Naive thymus-derived CD4-positive, alpha-beta T cell (primary cell): ENCODE measurements at regions of chr3 and their contacts with region 1.

Region 1: DNA sequence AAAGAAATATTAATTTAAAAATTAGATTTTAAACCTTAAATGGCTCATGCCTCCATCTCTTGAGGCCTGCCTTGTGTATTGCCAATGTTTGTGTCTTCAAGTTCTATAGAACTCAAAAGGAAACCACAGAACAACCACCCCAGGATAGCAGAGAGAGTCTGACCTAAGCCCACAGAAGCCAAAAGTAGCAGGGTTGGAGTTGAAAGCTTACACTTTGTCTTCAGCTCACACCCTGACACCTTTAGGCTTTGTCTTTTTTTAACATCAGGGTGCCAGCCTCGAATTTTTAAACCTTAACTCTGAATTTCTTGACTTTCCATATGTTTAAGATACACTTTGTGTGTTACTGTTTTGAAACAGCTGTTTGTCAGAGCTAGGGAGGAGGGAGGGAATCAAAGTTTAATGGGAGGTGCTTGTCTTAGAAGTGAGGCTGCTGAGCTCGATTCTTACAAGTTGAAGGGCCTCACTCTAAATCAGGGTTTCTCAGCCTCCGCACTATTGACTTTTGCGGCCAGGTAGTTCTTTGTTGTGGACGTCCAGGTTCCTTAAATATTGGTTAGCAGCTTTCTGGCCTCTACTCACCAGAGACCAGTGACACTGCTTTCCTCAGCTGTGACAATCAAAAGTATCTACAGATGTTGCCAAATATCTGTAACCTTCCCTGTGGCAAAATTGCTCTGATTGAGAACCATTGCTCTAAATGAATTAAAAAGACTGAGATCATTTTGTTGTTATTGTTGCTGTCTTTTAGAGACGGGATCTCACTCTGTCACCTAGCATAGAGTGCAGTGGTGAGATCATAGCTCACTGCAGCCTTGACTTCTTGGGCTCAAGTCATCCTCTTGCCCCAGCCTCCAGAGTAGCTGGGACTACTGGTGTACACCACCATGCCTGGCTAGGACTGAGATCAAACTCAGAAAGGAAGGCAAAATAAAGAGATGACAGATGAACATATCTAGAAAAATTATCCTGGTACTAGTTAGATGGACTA is 139.2 kb upstream of the EOMES start:
- DNase-seq: peak in 6 of 9 donors; percentile 25 to 56 (median 45)
- ATAC-seq: peak; percentile 86
- H3K4me3 ChIP-seq: no peak overlapping the region
- H3K4me3 Mint-ChIP-seq: peak overlapping the region; percentile 4 to 64 (median 55)
- H3K27ac ChIP-seq: peak overlapping the region; percentile 47
- H3K27ac Mint-ChIP-seq: peak overlapping the region; percentile 83 to 95 (median 92)
- H3K4me1 ChIP-seq: peaks cover 23 to 26% of the 10 kb centered on the region in 2 donors
- H3K4me1 Mint-ChIP-seq: peaks cover 23 to 56% (median 52%) of the 10 kb centered on the region in 7 donors
- H3K27me3 ChIP-seq: no peaks in the 10 kb centered on the region
- H3K27me3 Mint-ChIP-seq: no peaks in the 10 kb centered on the region

Region 2: DNA sequence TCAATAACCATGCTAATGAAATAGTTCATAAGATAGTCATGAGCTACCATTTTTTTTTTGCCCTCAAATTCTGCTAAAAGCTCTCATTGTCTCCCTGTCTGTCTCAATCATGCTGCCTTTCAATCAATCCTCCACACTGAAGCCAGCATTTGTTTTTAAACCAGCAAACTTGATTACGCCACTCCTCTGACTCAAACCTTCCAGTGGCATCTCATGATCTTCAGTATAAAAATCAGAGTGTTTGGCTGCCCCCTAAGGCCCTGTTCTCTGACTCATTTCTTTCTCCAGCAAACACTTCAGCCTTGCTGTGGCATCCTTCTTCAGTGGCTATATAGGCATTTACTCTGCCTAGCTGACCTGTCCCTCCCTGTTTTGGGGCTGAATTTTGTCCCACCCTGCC is 103.3 kb before region 1 on chr3:
- CTCF ChIA-PET with region 1: no interaction called
- POLR2A ChIA-PET with region 1: no interaction called
- intact Hi-C with region 1: loop called in 1 of 2 experiments (anchors 10 kb)
- DNase-seq: peak in 1 of 9 donors; percentile 28
- ATAC-seq: no peak
- H3K4me3 ChIP-seq: no peak overlapping the region
- H3K4me3 Mint-ChIP-seq: no peak overlapping the region
- H3K27ac ChIP-seq: no peak overlapping the region
- H3K27ac Mint-ChIP-seq: no peak overlapping the region
- H3K4me1 ChIP-seq: no peaks in the 10 kb centered on the region
- H3K4me1 Mint-ChIP-seq: peaks cover 0 to 6% (median 1%) of the 10 kb centered on the region in 7 donors
- H3K27me3 ChIP-seq: no peaks in the 10 kb centered on the region
- H3K27me3 Mint-ChIP-seq: no peaks in the 10 kb centered on the region

Region 3: DNA sequence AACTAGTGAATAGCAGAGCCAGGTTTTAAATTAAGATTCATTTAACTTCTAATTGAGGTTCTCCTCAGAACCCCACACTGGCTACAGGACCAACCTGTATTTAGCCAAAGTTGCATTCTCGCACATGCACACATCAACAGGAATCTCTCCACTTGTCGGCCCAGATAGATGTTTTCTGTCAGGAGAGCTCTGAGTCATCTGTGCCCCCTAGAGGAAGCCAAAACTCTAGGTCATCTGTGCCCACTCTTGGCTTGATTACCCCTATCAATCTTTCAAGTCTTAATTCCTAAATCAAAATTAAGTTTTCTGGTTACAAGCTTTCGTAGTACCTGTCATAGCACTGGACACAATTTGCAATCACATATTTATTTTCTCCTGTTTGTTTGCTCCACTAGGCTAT is 34.3 kb before region 1 on chr3:
- CTCF ChIA-PET with region 1: no interaction called
- POLR2A ChIA-PET with region 1: no interaction called
- intact Hi-C with region 1: loop called in 1 of 2 experiments (anchors 5 kb)
- DNase-seq: no peak
- ATAC-seq: no peak
- H3K4me3 ChIP-seq: no peak overlapping the region
- H3K4me3 Mint-ChIP-seq: no peak overlapping the region
- H3K27ac ChIP-seq: no peak overlapping the region
- H3K27ac Mint-ChIP-seq: peak overlapping the region in 1 of 9 donors; percentile 38
- H3K4me1 ChIP-seq: peaks cover 0 to 5% of the 10 kb centered on the region in 2 donors
- H3K4me1 Mint-ChIP-seq: peaks cover 1 to 16% (median 12%) of the 10 kb centered on the region in 7 donors
- H3K27me3 ChIP-seq: no peaks in the 10 kb centered on the region
- H3K27me3 Mint-ChIP-seq: no peaks in the 10 kb centered on the region

Region 4: DNA sequence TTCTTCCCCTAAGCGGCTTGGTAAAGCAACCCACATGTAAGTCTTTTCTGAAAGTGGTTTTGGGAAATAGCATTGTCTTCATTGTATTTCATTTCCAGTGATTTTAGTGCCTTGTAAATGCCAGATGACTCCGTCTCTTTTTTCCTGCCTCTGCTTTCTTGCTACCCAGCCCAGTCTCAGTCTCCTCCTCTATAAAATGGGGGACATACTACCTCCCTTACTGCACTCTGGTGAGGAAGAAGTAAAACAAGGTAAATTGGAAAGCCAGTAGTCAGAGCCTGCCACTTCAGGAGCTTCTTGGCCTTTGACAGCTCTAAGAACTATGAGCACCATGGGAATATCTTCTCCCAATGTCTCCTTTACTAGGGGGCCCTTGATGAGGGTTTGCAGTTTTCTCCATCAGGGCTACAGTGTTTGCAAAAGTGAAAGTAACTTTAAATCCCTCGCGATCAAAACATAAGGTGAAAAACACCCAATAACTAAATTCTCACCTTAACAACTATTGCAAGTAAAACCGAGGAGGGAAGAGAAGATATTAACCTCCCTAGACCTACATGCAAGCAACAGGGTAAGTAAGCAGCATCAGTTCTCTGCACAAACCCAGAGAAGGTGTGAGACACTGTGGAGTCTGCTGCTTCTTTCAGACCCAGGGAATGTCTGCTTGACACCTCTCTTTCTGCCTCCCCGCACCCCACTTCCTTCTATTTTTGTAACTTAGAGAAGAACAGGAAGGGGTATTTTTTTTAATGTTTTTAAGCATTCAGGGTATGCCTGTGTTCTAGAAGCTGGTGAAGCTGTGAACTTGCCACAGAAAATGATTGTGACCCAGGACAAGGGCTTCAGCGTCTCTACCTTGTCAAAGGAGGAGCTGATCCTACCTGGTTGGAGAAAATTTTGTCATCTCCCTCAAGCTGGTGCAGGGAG is 19.9 kb after region 1 on chr3:
- CTCF ChIA-PET with region 1: interaction called, 5 read pairs
- POLR2A ChIA-PET with region 1: interaction called, 10 read pairs
- intact Hi-C with region 1: loop called (anchors 1 kb)
- DNase-seq: peak in 8 of 9 donors; percentile 24 to 75 (median 62)
- ATAC-seq: peak; percentile 87
- H3K4me3 ChIP-seq: peak overlapping the region; percentile 43
- H3K4me3 Mint-ChIP-seq: peak overlapping the region; percentile 82 to 94 (median 89)
- H3K27ac ChIP-seq: peak overlapping the region; percentile 75
- H3K27ac Mint-ChIP-seq: peak overlapping the region; percentile 91 to 99 (median 97)
- H3K4me1 ChIP-seq: peaks cover 28 to 47% of the 10 kb centered on the region in 2 donors
- H3K4me1 Mint-ChIP-seq: peaks cover 39 to 85% (median 73%) of the 10 kb centered on the region in 7 donors
- H3K27me3 ChIP-seq: no peaks in the 10 kb centered on the region
- H3K27me3 Mint-ChIP-seq: peaks cover 0 to 4% (median 0%) of the 10 kb centered on the region in 5 donors

Region 5: GRCh38 chr3:27900316-27900715 is 39.0 kb after region 1 on chr3:
- CTCF ChIA-PET with region 1: no interaction called
- POLR2A ChIA-PET with region 1: no interaction called
- intact Hi-C with region 1: loop called (anchors 1 kb)
- DNase-seq: peak in 1 of 9 donors; percentile 25
- ATAC-seq: peak; percentile 63
- H3K4me3 ChIP-seq: no peak overlapping the region
- H3K4me3 Mint-ChIP-seq: peak overlapping the region in 2 of 10 donors; percentile 10 to 25
- H3K27ac ChIP-seq: no peak overlapping the region
- H3K27ac Mint-ChIP-seq: peak overlapping the region in 6 of 9 donors; percentile 2 to 76 (median 52)
- H3K4me1 ChIP-seq: peaks cover 24 to 37% of the 10 kb centered on the region in 2 donors
- H3K4me1 Mint-ChIP-seq: peaks cover 19 to 63% (median 49%) of the 10 kb centered on the region in 7 donors
- H3K27me3 ChIP-seq: no peaks in the 10 kb centered on the region
- H3K27me3 Mint-ChIP-seq: no peaks in the 10 kb centered on the region

Region 6: GRCh38 chr3:27905625-27906024 is 44.3 kb after region 1 on chr3:
- CTCF ChIA-PET with region 1: no interaction called
- POLR2A ChIA-PET with region 1: interaction called, 4 read pairs
- intact Hi-C with region 1: loop called in 1 of 2 experiments (anchors 1 kb)
- DNase-seq: no peak
- ATAC-seq: peak; percentile 64
- H3K4me3 ChIP-seq: no peak overlapping the region
- H3K4me3 Mint-ChIP-seq: no peak overlapping the region
- H3K27ac ChIP-seq: no peak overlapping the region
- H3K27ac Mint-ChIP-seq: peak overlapping the region in 1 of 9 donors; percentile 92
- H3K4me1 ChIP-seq: peaks cover 24 to 45% of the 10 kb centered on the region in 2 donors
- H3K4me1 Mint-ChIP-seq: peaks cover 15 to 51% (median 38%) of the 10 kb centered on the region in 7 donors
- H3K27me3 ChIP-seq: no peaks in the 10 kb centered on the region
- H3K27me3 Mint-ChIP-seq: no peaks in the 10 kb centered on the region

Region 7: DNA sequence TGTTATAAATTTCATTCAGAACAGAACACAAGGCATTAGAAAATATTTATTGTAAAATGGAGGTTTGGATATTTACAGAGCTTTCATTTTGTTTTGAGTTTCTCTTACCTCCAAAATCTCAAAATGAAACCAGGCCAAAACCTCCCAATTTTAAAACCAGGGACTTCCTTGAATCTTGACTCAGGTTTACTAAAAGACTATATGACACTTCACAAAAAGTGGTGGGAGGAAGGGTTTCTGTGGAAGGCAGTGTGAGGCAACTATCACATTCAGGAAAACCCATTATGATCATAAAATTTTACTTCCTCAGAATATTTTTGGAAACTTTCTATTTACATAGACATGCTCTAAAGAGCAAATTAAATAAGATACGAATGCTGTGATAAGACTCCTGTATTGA is 66.5 kb after region 1 on chr3:
- CTCF ChIA-PET with region 1: no interaction called
- POLR2A ChIA-PET with region 1: no interaction called
- intact Hi-C with region 1: loop called in 1 of 2 experiments (anchors 10 kb)
- DNase-seq: no peak
- ATAC-seq: no peak
- H3K4me3 ChIP-seq: no peak overlapping the region
- H3K4me3 Mint-ChIP-seq: no peak overlapping the region
- H3K27ac ChIP-seq: no peak overlapping the region
- H3K27ac Mint-ChIP-seq: peak overlapping the region in 1 of 9 donors; percentile 20
- H3K4me1 ChIP-seq: no peaks in the 10 kb centered on the region
- H3K4me1 Mint-ChIP-seq: peaks cover 0 to 22% (median 9%) of the 10 kb centered on the region in 7 donors
- H3K27me3 ChIP-seq: no peaks in the 10 kb centered on the region
- H3K27me3 Mint-ChIP-seq: no peaks in the 10 kb centered on the region

Region 8: DNA sequence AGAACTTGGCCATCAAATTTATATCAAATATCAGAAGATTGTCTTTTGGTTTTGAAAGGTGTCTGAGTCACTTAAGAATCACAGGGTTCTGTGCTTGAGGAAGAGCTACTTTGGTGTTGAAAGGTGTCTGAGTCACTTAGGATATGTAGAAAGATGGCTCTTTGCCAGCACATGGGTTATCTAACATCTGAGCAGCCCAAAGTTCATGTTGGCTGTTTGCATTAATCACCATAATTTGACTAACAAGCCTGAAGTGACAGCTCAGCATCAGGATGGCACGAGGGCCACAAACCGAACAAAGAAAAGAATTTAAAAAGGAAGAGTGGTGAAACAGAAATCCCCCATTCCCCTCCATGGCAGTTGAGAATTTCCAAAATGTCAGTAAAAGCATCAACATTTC is 189.6 kb after region 1 on chr3:
- CTCF ChIA-PET with region 1: no interaction called
- POLR2A ChIA-PET with region 1: no interaction called
- intact Hi-C with region 1: no loop called
- DNase-seq: no peak
- ATAC-seq: peak; percentile 34
- H3K4me3 ChIP-seq: no peak overlapping the region
- H3K4me3 Mint-ChIP-seq: no peak overlapping the region
- H3K27ac ChIP-seq: no peak overlapping the region
- H3K27ac Mint-ChIP-seq: no peak overlapping the region
- H3K4me1 ChIP-seq: no peaks in the 10 kb centered on the region
- H3K4me1 Mint-ChIP-seq: peaks cover 0 to 7% (median 4%) of the 10 kb centered on the region in 7 donors
- H3K27me3 ChIP-seq: no peaks in the 10 kb centered on the region
- H3K27me3 Mint-ChIP-seq: peaks cover 0 to 7% (median 4%) of the 10 kb centered on the region in 5 donors